Activated B cell treated with CpG ODN at 0.5 μM for 24 hours (primary cell): ENCODE measurements at regions of chr1 and their contacts with region 1.

Region 1: GRCh38 chr1:235415008-235415904 is 48.0 kb downstream of the TBCE start:
- DNase-seq: no peak
- ATAC-seq: peak; percentile 88
- H3K4me3 Mint-ChIP-seq: no peak overlapping the region
- H3K27ac Mint-ChIP-seq: no peak overlapping the region
- H3K4me1 Mint-ChIP-seq: peaks cover 2% of the 10 kb centered on the region
- H3K27me3 Mint-ChIP-seq: no peaks in the 10 kb centered on the region
- CTCF ChIP-seq: peak; percentile 34

Region 2: DNA sequence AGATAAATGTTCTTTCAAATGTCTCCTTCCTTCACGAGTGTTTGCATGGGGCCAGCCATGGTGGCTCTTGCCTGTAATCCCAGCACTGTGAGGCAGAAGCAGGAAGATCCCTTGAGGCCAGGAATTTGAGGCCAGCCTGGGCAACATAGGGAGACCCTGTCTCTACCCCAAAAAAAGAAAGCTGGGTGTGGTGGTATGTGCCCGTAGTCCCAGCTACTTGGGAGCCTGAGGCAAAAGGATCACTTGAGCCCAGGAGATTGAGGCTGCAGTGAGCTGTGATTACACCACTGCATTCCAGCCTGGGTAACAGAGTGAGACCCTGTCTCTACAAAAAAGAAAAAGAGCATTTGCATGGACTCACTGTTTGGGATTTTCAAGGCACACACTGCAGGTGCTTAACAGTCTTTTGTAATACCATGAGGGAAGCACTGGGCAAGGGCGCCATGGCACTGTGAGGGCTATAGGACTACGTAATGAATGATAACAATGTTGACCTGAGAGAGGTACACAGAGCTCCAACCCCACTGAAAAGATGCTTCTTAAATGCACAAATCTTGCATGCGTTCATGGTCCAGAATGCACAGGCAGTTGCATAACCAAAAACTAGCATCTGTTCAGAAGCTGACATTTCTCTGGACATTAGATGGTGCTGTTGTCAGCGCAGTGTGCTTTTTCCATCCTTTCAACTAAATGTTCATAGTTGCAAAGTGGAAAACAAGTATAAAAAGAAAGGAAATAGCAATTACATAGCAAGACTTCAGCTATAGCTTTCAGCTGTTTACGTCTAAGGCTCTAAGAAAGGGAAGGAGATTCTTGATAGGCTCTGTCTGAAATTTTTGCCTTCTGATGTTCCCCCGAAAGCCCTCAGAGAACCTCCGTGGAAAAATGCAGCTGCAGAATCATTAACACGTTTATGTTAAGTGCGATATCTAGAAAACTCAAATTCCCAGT is 928.5 kb before region 1 on chr1:
- CTCF ChIA-PET with region 1: interaction called, 15 read pairs
- POLR2A ChIA-PET with region 1: no interaction called
- intact Hi-C with region 1: loop called (anchors 2 kb)
- DNase-seq: no peak
- ATAC-seq: peak; percentile 47
- H3K4me3 Mint-ChIP-seq: peak overlapping the region; percentile 11
- H3K27ac Mint-ChIP-seq: no peak overlapping the region
- H3K4me1 Mint-ChIP-seq: peaks cover 29% of the 10 kb centered on the region
- H3K27me3 Mint-ChIP-seq: peaks cover 7% of the 10 kb centered on the region
- CTCF ChIP-seq: no peak

Region 3: DNA sequence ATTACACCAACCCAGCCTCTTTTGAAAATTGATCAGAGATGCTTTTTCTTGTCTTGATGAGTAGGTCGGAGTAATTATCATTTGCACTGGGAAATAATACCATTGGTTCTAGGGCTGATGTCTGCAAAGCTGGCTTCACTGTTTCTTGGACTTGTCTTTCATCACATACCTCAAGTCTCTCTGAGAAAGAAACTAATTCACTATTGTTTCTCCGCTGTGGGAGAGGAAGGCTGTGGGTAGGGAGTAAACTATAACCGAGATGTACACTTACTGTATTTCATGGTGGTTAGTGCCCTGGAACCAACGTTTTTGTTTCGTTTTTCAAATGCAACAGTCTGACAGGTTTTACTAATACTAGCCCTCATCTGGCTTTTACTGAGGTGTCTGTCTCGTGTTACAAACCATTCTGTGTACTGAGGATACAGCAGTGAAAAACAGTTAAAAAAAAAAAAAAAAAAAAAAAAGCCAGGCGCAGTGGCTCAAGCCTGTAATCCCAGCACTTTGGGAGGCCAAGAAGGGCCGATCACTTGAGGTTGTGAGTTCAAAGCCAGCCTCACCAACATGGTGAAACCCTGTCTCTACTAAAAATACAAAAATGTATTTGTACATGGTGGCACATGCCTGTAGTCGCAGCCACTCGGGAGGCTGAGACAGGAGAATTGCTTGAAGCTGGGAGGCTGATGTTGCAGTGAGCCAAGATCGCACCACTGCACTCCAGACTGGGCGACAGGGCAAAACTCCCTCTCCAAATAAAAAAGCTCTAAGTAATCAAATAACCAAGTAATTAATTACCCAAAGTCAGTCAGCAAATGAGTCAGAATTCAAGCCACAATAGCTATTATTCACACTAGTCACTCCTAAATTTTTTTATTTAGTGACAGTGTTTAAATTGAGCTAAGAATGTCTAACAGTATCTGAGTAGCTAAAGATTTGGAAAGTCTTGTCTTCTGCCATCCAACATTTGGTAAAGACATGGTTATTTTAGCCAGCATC is 309.9 kb before region 1 on chr1:
- CTCF ChIA-PET with region 1: interaction called, 6 read pairs
- POLR2A ChIA-PET with region 1: no interaction called
- intact Hi-C with region 1: loop called (anchors 1 kb)
- DNase-seq: no peak
- ATAC-seq: no peak
- H3K4me3 Mint-ChIP-seq: peak overlapping the region; percentile 67
- H3K27ac Mint-ChIP-seq: peak overlapping the region; percentile 14
- H3K4me1 Mint-ChIP-seq: peaks cover 25% of the 10 kb centered on the region
- H3K27me3 Mint-ChIP-seq: no peaks in the 10 kb centered on the region
- CTCF ChIP-seq: no peak

Region 4: DNA sequence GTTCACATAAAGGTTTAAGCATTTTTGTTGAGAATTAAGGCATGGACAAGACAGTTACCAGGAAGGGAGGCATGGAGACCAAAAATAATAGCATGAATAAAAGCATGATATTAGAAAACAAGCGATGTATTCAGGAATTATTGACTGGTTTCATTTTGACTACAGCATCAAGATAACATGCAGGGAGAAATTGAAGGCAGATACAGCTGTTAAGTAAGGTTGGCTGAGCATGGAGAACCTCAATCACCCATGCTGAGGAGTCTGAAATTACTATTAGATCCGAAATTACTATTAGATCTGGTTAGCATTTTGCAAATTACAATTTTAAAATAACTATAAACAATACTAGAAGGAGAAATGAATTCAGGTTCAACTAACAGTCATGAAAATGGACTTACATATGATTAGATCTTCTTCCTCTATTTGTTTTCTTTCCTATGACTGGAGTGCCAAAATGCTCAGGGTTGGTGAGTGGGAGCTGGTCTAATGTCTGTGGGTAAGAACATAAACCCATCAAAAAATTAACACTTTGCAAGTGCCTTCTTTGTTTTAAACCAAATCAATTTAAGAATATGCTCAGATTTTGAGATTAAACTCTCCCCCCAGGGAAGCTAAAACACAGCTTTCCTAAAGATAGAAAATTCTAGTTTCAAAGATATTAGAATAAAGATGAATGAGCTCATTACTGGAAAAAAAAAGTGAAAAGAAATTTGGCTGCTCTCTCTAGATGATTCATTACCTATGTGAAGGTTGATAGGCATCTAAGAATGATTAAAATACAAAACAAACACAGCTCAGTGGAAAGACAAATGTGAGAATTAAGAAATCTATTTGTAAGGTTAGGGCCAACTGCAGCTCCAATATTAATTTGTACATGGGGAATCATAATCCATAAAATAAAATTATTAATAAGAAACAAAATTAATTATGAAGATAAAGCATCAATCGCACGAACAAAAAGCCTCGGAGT is 168.9 kb before region 1 on chr1:
- CTCF ChIA-PET with region 1: interaction called, 82 read pairs
- POLR2A ChIA-PET with region 1: interaction called, 4 read pairs
- intact Hi-C with region 1: no loop called
- DNase-seq: no peak
- ATAC-seq: no peak
- H3K4me3 Mint-ChIP-seq: no peak overlapping the region
- H3K27ac Mint-ChIP-seq: no peak overlapping the region
- H3K4me1 Mint-ChIP-seq: peaks cover 16% of the 10 kb centered on the region
- H3K27me3 Mint-ChIP-seq: no peaks in the 10 kb centered on the region
- CTCF ChIP-seq: no peak

Region 5: DNA sequence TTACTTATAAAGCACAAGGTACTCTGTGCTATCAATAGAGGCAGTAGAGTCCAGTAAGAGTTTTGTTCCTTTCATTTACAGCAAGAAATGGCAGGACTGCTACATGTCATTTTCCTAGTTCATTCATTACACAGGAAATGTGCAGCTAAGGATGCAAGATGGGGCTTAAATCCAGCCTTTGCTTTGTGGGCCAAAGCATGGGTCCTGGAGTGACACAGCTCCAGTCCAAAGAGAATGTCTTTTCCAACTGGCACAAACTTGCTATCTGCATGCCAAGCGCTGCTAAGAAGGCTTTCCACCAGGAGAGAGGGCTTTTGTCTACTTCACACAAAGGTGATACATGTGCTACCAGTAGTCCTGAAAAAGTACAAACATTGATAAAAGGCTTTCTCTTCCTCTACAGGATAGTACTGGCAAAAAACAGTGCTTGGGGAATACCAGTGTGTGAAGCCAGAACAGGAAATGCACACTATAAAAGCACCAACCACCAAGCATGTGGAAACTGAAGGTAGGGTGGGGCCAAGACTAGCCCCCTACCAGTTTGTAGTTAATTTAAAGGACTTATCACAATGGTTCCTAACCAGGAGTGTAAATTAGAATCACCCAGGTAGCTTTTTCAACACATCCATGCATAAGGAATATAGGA is 156.0 kb before region 1 on chr1:
- CTCF ChIA-PET with region 1: interaction called, 58 read pairs
- POLR2A ChIA-PET with region 1: no interaction called
- intact Hi-C with region 1: no loop called
- DNase-seq: no peak
- ATAC-seq: peak; percentile 34
- H3K4me3 Mint-ChIP-seq: peak overlapping the region; percentile 9
- H3K27ac Mint-ChIP-seq: peak overlapping the region; percentile 68
- H3K4me1 Mint-ChIP-seq: peaks cover 67% of the 10 kb centered on the region
- H3K27me3 Mint-ChIP-seq: no peaks in the 10 kb centered on the region
- CTCF ChIP-seq: no peak

Region 6: DNA sequence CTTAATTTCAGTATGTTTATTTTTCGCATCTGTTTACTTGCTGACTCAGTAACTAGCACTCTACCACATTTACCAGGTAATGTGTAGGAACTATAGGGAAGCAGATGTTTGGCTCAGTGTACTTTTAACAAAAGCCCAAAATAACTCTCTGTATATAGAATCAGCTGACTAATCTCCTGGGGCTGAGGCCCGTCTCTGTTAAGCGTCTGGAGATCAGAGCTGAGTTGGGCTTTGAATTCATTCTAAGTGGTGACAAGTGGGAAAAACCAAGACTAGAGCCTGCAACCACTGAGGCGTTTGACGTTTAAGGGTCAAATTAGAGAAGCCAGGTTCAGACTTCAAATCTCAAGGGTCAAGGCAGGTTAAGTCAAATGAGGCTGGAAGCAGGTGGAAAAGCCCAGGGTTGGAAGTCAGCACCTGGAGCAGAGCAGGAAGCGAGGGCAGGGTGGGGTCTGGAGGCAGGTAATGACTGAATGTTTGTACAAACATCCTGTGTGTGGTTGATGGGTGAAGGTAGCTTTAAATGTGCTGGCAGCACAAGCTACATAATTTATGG is 508.3 kb after region 1 on chr1:
- CTCF ChIA-PET with region 1: no interaction called
- POLR2A ChIA-PET with region 1: no interaction called
- intact Hi-C with region 1: no loop called
- DNase-seq: no peak
- ATAC-seq: peak; percentile 85
- H3K4me3 Mint-ChIP-seq: peak overlapping the region; percentile 56
- H3K27ac Mint-ChIP-seq: peak overlapping the region; percentile 78
- H3K4me1 Mint-ChIP-seq: peaks cover 59% of the 10 kb centered on the region
- H3K27me3 Mint-ChIP-seq: no peaks in the 10 kb centered on the region
- CTCF ChIP-seq: no peak